ENCODE measurements at regions of chr12 and their contacts with region 1.

Region 1: DNA sequence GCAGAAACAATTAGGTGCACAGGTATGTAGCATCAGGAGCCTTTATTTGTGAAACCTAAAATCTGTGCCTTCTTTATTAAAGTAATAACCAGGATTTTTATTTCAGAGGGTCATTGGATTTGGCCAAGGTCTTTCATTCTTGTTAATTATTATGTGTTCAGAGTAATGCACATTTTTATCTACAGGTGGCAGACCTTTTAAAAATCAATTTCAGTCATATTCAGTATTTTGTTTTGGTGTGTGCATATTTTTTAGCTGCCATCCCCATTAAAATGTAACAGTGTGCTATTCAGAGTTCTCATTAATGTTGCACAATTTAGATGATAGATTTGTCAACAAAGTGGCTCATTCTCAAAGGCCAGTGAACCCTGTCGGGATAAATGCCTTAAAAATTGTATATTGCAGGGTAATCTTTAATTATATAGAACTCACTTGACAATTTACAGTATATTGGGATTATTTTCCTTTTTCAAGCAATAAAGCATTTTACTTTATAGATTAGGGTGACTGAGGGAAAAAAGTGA is 319.3 kb upstream of the SOX5 start:
- DNase-seq: no peak
- H3K4me3 ChIP-seq: no peak overlapping the region
- H3K27ac ChIP-seq: no peak overlapping the region
- H3K4me1 ChIP-seq: no peaks in the 10 kb centered on the region
- H3K27me3 ChIP-seq: no peaks in the 10 kb centered on the region
- CTCF ChIP-seq: no peak; the same call in 1 of the 2 replicates

Region 2: DNA sequence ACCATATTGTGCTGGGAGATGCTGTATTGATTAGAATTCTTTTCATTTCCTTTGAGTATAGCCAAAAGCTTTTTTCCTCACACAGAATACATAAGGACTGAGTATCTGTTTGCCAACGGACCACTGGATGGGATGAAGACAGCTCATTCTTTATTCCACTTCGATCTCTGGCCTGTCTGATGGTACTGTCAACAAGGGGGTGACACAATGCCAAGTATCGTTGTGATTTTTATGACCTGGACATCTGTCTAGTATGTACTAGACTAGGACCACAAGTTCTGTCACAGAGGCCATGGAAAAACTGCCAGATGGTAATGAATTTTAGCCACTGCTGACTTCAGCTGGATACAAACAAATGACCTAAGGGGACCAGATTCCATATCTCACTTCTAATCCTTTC is 822.0 kb before region 1 on chr12:
- CTCF ChIA-PET with region 1: no interaction called
- POLR2A ChIA-PET with region 1: no interaction called
- intact Hi-C with region 1: no loop called
- DNase-seq: no peak
- H3K4me3 ChIP-seq: no peak overlapping the region
- H3K27ac ChIP-seq: no peak overlapping the region
- H3K4me1 ChIP-seq: no peaks in the 10 kb centered on the region
- H3K27me3 ChIP-seq: no peaks in the 10 kb centered on the region
- CTCF ChIP-seq: no peak

Region 3: DNA sequence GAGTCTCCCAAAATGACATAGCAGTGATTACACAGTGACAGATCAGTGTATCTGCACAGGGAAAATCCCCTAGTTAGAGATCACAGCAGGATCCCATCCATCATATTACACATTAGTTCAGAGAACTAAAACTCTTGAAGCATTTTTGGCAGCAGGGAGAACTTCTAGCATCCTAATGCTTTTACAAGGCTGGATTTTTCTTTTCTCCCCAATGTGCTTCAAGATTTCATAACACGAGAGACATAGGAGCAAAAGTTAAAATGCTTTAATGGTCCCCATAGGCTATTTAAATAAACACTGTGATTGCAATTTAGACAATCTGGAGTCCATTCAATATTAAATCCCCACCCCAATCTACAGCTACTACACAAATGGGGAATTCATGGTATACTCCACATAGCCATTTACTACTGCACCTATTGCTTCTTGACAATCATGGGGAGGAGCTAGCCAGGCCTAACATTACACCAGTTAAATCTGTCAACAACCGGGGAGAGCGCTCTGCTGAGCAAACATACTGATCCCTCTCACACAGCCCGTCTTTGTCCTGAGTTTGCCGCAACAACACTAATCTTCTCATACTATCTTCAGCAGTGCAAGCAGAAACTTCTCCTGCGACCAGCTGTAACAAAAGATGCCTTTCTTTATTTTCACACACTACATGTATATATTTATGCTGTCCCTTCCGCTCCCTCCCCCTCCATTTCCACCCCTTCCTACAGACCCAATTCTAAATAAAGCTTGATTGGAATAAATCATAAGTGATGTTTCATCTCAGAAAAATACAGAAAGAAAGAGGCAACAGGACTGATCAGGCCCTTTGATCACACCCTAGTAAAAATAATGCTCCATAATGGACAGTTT is 199.0 kb before region 1 on chr12:
- CTCF ChIA-PET with region 1: no interaction called
- POLR2A ChIA-PET with region 1: no interaction called
- intact Hi-C with region 1: no loop called
- DNase-seq: peak; percentile 77
- H3K4me3 ChIP-seq: no peak overlapping the region
- H3K27ac ChIP-seq: peak overlapping the region; percentile 60
- H3K4me1 ChIP-seq: peaks cover 30% of the 10 kb centered on the region
- H3K27me3 ChIP-seq: no peaks in the 10 kb centered on the region
- CTCF ChIP-seq: no peak

Region 4: GRCh38 chr12:24222968-24223367 is 45.8 kb before region 1 on chr12:
- CTCF ChIA-PET with region 1: no interaction called
- POLR2A ChIA-PET with region 1: no interaction called
- intact Hi-C with region 1: no loop called
- DNase-seq: peak; percentile 27
- H3K4me3 ChIP-seq: no peak overlapping the region
- H3K27ac ChIP-seq: no peak overlapping the region
- H3K4me1 ChIP-seq: peaks cover 14% of the 10 kb centered on the region
- H3K27me3 ChIP-seq: no peaks in the 10 kb centered on the region
- CTCF ChIP-seq: no peak

Region 5: DNA sequence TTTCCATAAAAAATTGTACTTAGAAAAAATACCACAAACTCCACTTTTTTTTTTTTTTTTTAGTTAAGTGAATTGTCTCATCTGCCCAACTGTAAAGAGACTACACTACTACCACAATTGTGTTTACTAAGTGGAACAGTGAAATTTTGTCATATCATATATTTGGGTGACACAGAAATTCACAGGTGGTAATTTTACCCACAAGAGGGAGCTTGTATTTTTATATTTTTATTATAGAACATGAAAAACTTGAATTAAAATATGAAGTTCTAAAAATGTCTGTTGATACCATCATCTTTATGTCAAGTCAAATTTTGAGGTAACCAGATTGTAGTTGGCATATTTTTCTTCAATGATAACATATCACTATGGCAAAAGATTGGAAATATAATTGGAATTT is 10.1 kb after region 1 on chr12:
- CTCF ChIA-PET with region 1: no interaction called
- POLR2A ChIA-PET with region 1: interaction called, 14 read pairs
- intact Hi-C with region 1: no loop called
- DNase-seq: no peak
- H3K4me3 ChIP-seq: no peak overlapping the region
- H3K27ac ChIP-seq: no peak overlapping the region
- H3K4me1 ChIP-seq: peaks cover 32% of the 10 kb centered on the region
- H3K27me3 ChIP-seq: no peaks in the 10 kb centered on the region
- CTCF ChIP-seq: peak; percentile 35; the same call in 1 of the 2 replicates

Region 6: DNA sequence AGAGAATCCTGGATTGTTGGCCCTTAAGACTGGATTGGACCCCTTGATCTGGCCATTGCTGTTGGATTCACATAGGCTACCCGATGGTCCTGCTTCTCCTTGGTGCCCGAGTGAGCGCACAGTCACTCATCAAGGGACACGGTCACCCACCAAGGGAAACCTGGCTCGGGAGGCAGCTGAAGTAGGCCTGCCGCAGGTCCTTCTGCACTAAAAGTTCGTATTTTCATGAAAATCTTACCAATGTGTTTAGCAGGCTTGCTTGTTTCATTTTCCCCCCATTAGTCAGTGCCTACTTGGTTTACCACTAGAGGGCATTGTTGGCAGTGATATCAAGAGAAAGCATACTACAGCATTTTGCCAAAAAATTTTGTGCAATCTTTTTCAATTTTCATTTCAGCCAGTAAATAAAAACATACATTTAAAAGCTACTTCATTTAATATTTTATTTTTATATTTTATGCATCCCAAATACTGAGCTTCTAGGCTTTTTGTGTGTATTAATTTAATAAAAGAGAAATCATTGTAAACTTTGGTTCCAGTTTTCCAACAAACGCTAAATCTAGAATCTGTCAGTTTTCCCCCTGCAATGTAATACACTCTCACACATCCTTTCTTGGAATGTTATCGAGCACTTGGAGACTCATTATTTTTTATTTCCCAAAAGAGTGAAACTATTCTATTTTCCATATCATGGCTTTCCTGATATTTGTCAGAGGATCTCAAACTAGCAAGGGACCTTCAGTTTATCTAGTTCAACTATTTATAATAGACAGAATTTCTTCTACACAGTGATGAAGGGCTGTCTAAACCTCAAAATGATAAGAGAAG is 1167.7 kb after region 1 on chr12:
- CTCF ChIA-PET with region 1: no interaction called
- POLR2A ChIA-PET with region 1: no interaction called
- intact Hi-C with region 1: no loop called
- DNase-seq: peak; percentile 79
- H3K4me3 ChIP-seq: peak overlapping the region; percentile 27
- H3K27ac ChIP-seq: no peak overlapping the region
- H3K4me1 ChIP-seq: no peaks in the 10 kb centered on the region
- H3K27me3 ChIP-seq: no peaks in the 10 kb centered on the region
- CTCF ChIP-seq: peak; percentile 90

Measured in A673 (cell line).